ENCODE measurements at regions of chr3 and their contacts with region 1.

Region 1: DNA sequence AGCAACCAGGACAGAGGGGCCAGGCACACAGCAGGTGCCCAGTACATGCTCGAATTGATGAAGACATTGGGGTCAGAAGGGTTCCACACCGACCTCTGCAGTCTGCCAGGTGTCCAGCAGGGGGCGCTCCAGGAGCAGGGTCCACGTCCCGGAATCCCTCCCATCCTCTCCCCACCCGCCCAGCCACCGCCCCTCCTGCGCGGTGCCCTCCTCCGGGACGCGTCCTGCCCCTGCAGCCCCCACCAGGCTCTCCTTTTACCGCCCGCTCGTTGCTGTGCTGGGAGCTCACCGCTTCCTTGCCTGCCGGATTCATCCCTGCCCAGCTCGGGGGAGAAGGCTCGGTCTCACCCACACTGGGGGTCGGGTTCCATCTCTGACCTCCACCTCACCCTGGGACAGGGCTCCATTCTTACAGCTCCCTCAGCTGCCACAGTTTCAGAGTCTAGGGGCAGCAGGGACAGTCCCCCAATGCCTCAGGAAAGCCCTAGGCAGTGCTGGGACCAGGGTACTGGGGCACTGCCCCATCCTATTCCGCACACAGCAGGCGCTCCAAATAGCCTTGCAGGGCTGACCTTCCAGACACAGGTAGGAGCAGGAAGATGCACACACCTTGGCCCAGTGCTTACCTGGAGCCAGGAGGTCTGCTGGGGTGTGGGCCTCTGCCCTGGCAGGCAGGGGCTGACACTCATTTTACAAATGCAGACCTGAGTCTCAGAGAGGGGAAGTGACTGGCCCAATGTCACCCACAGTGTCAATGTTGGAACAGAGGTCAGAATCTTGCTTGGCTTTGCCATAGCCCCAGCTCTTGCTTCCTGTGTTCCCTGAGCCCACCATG is 31.0 kb downstream of the GRIP2 start:
- DNase-seq: peak; percentile 72 to 85
- H3K4me3 ChIP-seq: no peak overlapping the region
- H3K4me3 Mint-ChIP-seq: peak overlapping the region; percentile 27
- H3K27ac Mint-ChIP-seq: no peak overlapping the region
- H3K4me1 ChIP-seq: no peaks in the 10 kb centered on the region
- H3K4me1 Mint-ChIP-seq: no peaks in the 10 kb centered on the region
- H3K27me3 ChIP-seq: no peaks in the 10 kb centered on the region; the same call in 1 of the 2 replicates
- H3K27me3 Mint-ChIP-seq: no peaks in the 10 kb centered on the region
- CTCF ChIP-seq: peak; percentile 91 to 98

Region 2: GRCh38 chr3:14548321-14548729 is 39.1 kb after region 1 on chr3:
- CTCF ChIA-PET with region 1: interaction called, 5 read pairs
- POLR2A ChIA-PET with region 1: no interaction called
- intact Hi-C with region 1: loop called (anchors 1 kb)
- DNase-seq: peak; percentile 59 to 61
- H3K4me3 ChIP-seq: no peak overlapping the region
- H3K4me3 Mint-ChIP-seq: no peak overlapping the region
- H3K27ac Mint-ChIP-seq: no peak overlapping the region
- H3K4me1 ChIP-seq: peaks cover 9% of the 10 kb centered on the region
- H3K4me1 Mint-ChIP-seq: peaks cover 12% of the 10 kb centered on the region
- H3K27me3 ChIP-seq: no peaks in the 10 kb centered on the region
- H3K27me3 Mint-ChIP-seq: no peaks in the 10 kb centered on the region
- CTCF ChIP-seq: peak; percentile 61 to 66

Region 3: GRCh38 chr3:14602006-14602803 is 93.0 kb after region 1 on chr3:
- CTCF ChIA-PET with region 1: no interaction called
- POLR2A ChIA-PET with region 1: no interaction called
- intact Hi-C with region 1: loop called (anchors 1 kb)
- DNase-seq: peak in 1 of 2 experiments; percentile 67
- H3K4me3 ChIP-seq: peak overlapping the region; percentile 55
- H3K4me3 Mint-ChIP-seq: peak overlapping the region; percentile 42
- H3K27ac Mint-ChIP-seq: no peak overlapping the region
- H3K4me1 ChIP-seq: peaks cover 13% of the 10 kb centered on the region
- H3K4me1 Mint-ChIP-seq: peaks cover 22% of the 10 kb centered on the region
- H3K27me3 ChIP-seq: no peaks in the 10 kb centered on the region
- H3K27me3 Mint-ChIP-seq: peaks cover 8% of the 10 kb centered on the region
- CTCF ChIP-seq: peak; percentile 41 to 45

Region 4: DNA sequence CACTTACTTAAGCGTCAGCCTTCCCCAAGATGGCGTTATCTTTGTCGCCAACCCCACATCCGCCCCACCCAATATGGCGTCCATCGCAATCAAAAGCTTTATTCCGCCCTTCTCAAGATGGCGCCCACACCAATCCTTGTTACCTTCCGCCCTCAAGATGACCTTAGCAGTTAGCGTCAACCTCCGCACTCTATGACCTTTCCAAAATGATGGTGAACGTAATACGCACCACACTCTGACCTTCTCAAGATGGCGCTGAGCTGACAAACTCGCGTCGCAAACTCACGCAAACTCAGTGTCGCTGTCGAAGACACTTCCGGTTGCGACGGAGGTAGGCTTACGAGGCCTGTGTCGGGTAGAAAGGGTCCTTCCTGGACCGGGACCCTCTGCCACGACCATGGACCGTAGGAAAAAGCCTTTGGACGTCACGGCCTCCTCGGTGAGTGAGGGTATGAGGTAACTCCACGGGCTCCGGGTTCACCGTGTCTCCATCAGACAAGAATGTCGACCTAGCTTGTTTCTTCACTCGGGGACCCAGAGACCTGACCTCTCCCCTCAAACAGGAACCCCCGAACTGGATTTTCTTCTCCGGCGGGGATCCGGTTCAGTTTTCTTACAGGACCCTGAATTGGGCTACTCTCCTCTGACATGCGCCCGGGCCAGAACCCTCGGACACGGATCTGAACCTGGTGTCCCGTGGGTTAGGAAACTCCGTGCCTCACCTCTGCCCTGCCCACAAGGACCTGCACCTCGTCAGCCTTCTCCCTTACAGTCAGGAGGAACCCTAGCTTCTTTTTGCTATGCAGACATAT is 142.5 kb after region 1 on chr3 and contains the start of gene CCDC174:
- CTCF ChIA-PET with region 1: interaction called, 5 read pairs
- POLR2A ChIA-PET with region 1: no interaction called
- intact Hi-C with region 1: loop called (anchors 2 kb)
- DNase-seq: peak; percentile 96 to 97
- H3K4me3 ChIP-seq: peak within 1 kb of the TSS; percentile 70
- H3K4me3 Mint-ChIP-seq: peak within 1 kb of the TSS; percentile 87
- H3K27ac Mint-ChIP-seq: peak within 1 kb of the TSS; percentile 93
- H3K4me1 ChIP-seq: peaks cover 22% of the 10 kb centered on the region
- H3K4me1 Mint-ChIP-seq: peaks cover 15% of the 10 kb centered on the region
- H3K27me3 ChIP-seq: no peaks in the 10 kb centered on the region
- H3K27me3 Mint-ChIP-seq: no peaks in the 10 kb centered on the region
- CTCF ChIP-seq: no peak
- total RNA-seq, gene CCDC174: 22.4 and 24.6 TPM in 2 replicates

Measured in Caco-2 (cell line).